ENCODE measurements at regions of chr7 and their contacts with region 1.

Region 1: DNA sequence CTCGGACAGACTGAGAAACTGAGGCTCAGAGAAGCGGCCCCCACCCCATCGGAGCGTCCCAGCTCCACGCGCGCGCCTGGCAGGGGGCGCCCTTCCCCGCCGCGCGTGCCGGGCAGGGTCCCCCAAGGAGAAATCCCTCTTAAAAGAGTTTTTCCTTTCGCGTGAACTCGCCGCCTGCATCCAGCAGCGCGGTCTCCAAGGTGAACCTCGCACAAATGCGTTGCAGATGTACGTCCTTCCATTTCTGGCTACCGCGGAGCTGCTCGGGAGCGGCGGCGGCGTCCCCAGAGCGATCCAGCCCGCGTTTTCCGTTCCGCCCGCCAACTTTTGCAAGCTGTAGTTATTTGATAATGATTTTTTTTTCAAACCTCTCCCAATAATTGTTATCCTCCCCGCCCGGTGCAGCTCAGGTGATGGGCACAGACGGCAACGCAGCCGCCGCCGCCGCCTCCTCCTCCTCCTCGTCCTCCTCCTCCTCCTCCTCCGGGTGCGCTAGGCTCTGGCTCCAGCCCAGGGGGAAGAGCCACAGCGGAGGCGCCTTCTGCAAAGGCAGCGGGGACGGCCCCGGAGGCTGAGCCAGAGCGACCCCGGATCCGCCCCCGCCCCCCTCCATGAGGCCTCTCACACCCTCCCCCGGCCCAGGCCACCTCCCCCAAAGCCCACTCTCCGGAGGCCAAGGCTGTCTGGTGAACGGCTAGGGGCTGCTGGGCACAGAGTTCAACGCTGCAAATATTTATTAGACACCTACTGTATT is 74.0 kb upstream of the CUX1 start:
- DNase-seq: peak; percentile 71
- H3K4me3 ChIP-seq: peak overlapping the region; percentile 52
- H3K27ac ChIP-seq: no peak overlapping the region
- H3K4me1 ChIP-seq: peaks cover 6% of the 10 kb centered on the region
- H3K27me3 ChIP-seq: no peaks in the 10 kb centered on the region
- CTCF ChIP-seq: peak; percentile 60

Region 2: GRCh38 chr7:101630591-101630990 is 112.8 kb before region 1 on chr7:
- CTCF ChIA-PET with region 1: no interaction called
- POLR2A ChIA-PET with region 1: no interaction called
- intact Hi-C with region 1: no loop called
- DNase-seq: no peak
- H3K4me3 ChIP-seq: no peak overlapping the region
- H3K27ac ChIP-seq: no peak overlapping the region
- H3K4me1 ChIP-seq: peaks cover 15% of the 10 kb centered on the region
- H3K27me3 ChIP-seq: no peaks in the 10 kb centered on the region
- CTCF ChIP-seq: no peak

Region 3: DNA sequence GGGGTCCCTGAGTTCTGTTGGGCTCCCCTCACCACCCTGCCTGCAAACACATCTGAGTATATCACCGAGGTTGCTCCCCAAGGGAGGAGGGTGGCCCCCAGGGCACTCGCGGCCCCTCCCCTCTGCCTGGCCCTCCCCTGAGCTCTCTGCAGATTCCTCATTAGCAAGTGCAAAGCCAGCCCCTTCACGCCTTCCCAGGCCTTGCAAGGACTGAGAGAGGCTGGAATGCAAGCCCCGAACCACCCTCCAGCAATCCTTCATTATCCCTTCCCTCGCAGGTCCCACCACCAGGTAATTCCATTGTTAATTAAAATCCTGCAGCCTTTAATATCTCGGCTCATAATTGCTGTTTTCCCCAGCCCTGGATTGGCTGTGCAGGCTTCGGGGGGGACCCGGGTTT is 79.0 kb before region 1 on chr7:
- CTCF ChIA-PET with region 1: no interaction called
- POLR2A ChIA-PET with region 1: no interaction called
- intact Hi-C with region 1: no loop called
- DNase-seq: no peak
- H3K4me3 ChIP-seq: no peak overlapping the region
- H3K27ac ChIP-seq: no peak overlapping the region
- H3K4me1 ChIP-seq: no peaks in the 10 kb centered on the region
- H3K27me3 ChIP-seq: no peaks in the 10 kb centered on the region
- CTCF ChIP-seq: no peak

Region 4: GRCh38 chr7:102089175-102090098 is 346.0 kb after region 1 on chr7:
- CTCF ChIA-PET with region 1: no interaction called
- POLR2A ChIA-PET with region 1: interaction called, 10 read pairs
- intact Hi-C with region 1: no loop called
- DNase-seq: no peak
- H3K4me3 ChIP-seq: no peak overlapping the region
- H3K27ac ChIP-seq: no peak overlapping the region
- H3K4me1 ChIP-seq: peaks cover 10% of the 10 kb centered on the region
- H3K27me3 ChIP-seq: no peaks in the 10 kb centered on the region
- CTCF ChIP-seq: no peak

Measured in A673 (cell line).